ENCODE measurements at regions of chr2 and their contacts with region 1.

Region 1: DNA sequence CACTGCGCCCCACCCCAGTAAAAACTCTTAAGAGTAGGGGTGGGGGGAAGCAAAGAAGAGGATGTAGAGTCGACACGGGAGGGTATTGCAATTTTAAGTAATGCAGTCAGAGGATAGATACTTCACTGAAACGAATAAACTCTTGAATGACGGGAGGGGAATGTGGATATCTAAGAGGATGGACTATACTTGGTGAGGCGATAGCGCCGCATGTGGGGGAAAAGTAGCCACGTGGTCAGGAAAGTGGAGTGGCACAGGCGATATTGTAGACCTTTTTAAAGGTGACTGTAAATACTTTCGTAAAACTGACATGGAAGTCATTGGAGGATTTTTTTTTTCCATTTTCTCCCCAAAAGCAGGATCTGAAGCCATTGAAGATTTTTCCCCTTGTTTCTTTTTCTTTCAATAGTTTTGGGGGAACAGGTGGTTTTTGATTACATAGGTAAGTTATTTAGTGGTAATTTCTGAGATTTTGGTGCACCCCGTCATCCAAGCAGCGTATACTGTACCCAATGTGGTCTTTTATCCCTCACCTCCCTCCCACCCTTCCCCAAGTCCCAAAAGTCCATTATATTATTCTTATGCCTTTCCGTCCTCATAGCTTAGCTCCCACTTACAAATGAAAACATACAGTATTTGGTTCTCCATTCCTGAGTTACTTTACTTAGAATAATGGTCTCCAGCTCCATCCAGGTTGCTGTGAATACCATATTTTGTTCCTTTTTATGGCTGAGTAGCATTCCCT is 13.8 kb downstream of the CLK1 start:
- DNase-seq: no peak
- ATAC-seq: no peak
- H3K4me3 Mint-ChIP-seq: no peak overlapping the region
- H3K27ac Mint-ChIP-seq: peak overlapping the region; percentile 28
- H3K4me1 Mint-ChIP-seq: no peaks in the 10 kb centered on the region
- H3K27me3 Mint-ChIP-seq: no peaks in the 10 kb centered on the region
- CTCF ChIP-seq: no peak

Region 2: GRCh38 chr2:200829258-200829655 is 21.4 kb before region 1 on chr2:
- CTCF ChIA-PET with region 1: interaction called, 3 read pairs
- POLR2A ChIA-PET with region 1: interaction called, 26 read pairs
- intact Hi-C with region 1: no loop called
- DNase-seq: no peak
- ATAC-seq: no peak
- H3K4me3 Mint-ChIP-seq: no peak overlapping the region
- H3K27ac Mint-ChIP-seq: no peak overlapping the region
- H3K4me1 Mint-ChIP-seq: peaks cover 7% of the 10 kb centered on the region
- H3K27me3 Mint-ChIP-seq: no peaks in the 10 kb centered on the region
- CTCF ChIP-seq: no peak

Region 3: DNA sequence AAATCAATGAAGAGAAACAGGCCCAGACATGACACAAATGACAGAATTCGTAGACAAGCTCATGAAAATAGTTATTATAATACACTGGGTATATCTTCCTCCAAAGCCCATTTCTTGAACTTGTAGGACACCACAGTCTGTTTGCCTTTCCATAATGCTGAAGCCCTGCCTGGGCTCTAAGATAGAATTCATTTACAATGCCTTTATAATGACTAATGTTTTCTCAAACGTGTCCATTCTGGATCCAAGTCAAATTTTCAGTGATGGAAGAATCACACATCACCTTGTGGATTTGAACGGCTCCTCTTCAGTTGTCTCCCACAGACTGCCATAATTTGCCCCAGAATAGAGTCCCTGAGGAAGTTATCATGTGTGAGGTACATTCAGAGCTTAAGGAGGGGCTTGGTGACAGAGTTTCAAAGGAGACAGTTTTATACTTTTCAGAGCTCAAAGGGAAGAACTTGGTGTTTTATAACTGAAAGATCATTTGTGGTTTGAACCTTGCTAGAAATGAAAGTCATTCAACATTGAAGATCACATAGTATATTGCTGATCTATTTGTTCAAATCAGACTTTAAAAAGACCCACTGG is 447.9 kb after region 1 on chr2:
- CTCF ChIA-PET with region 1: no interaction called
- POLR2A ChIA-PET with region 1: no interaction called
- intact Hi-C with region 1: no loop called
- DNase-seq: no peak
- ATAC-seq: no peak
- H3K4me3 Mint-ChIP-seq: no peak overlapping the region
- H3K27ac Mint-ChIP-seq: no peak overlapping the region
- H3K4me1 Mint-ChIP-seq: peaks cover 5% of the 10 kb centered on the region
- H3K27me3 Mint-ChIP-seq: no peaks in the 10 kb centered on the region
- CTCF ChIP-seq: no peak